Left colon (tissue), 2 donors: ENCODE measurements at regions of chr6 and their contacts with region 1.

Region 1: DNA sequence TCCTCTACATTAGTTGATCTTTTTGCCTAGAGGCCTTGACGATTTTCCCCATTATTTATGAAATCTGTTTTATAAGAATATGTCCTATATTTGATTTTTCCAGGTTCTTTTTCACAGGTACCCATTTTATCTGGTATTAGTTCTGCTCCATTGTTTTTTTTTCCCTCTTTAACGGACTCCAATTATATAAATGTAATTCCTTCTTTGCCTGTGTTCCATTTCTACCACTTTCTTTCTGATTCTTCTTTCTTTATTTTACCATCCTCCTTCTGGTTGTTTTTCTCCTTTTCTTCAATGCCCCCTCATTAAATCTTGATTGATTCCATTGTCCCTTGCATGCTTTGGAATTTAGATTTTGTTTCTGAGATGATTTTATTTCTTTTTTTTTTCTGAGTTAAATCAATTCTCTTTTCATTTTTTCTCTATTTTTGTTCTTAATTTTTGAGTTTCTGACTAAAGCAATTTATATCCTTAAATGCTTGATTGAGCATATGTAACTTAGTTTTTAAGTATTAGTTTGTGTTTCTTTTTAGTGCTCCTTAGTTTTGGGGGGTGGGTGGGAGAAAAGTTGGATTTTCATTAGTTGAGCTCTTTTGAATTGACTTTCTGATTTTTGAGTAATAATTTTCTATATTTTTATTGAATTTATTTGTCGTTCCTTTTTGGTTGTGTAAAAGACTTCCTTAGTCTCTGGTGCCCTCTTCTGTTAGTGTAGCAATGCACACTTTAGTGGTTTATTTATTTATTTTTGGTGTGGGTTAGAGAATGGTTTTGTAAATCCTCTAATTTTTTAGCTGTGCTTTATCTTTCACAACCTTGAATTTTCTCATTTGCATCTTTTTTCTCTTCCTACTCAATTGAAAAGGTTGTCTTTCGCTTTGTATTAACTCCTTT is 140.8 kb downstream of the FARS2 start:
- DNase-seq: no peak
- ATAC-seq: peak; percentile 41

Region 2: DNA sequence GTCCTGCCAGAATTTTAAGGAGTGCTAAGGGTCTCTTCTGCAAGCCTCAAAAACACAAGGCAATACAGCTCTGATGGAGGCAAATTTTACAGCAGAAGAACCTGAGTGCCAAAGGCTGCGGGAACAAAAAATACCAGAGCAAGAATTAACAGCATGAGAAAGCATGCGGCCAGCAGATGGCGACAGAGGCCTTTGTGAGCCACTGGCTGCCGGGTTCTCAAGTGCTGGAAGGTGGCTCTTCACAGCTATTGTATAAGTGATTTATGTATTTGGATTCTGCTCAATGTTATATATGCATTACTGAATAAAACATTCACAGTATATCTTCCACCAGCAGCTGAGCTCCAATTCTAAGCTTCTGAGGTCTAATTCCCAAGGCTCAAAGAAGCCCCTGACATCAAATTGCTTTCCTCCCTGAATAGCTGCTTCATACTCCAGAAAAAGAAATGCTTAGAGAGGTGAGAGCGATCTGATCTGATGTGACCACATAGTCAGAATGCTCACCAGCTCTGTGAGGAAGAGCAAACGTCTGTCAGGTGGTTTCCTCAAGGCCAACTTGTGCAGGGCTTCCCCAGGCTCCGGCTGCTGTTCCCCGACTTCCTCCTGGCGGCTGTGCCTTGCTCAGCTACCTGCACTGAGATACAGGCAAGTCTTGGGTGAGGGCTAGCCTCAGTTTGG is 258.3 kb before region 1 on chr6:
- intact Hi-C with region 1: loop called in 1 of 2 experiments (anchors 5 kb)
- DNase-seq: peak; percentile 69 to 96
- ATAC-seq: peak; percentile 91